Sciatic nerve (tissue), 2 donors: ENCODE measurements at regions of chr17 and their contacts with region 1.

Region 1: GRCh38 chr17:20991276-20992037 is 51.4 kb downstream of the USP22 start:
- DNase-seq: peak; percentile 56
- ATAC-seq: no peak

Region 2: DNA sequence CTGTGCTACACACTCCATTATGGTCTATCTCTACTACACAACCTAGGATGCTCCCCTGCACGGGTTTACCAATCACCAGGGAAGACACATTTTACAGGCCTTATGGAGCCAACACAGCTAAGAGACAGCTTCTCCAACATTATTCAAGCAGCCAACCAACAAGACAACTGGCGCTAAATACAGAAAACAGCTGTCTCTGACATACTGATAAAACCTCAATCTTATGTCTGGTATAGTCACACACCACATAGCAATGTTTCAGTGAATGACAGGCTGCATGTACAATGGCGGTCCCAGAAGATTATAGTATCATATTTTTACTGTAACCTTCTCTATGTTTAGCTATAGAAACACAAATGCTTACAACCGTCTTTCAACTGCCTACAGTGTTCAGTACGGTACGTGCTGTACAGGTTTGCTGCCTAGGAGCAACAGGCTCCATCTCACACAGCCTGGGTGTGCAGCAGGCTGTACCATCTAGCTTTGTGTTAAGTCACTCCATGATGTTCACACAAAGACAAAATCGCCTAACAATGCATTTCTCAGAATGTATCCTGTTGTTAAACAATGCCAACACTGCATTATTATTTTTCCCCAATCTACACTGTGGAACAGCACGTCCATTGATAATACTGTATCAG is 40.4 kb after region 1 on chr17:
- intact Hi-C with region 1: loop called (anchors 1 kb)
- DNase-seq: no peak
- ATAC-seq: no peak

Region 3: DNA sequence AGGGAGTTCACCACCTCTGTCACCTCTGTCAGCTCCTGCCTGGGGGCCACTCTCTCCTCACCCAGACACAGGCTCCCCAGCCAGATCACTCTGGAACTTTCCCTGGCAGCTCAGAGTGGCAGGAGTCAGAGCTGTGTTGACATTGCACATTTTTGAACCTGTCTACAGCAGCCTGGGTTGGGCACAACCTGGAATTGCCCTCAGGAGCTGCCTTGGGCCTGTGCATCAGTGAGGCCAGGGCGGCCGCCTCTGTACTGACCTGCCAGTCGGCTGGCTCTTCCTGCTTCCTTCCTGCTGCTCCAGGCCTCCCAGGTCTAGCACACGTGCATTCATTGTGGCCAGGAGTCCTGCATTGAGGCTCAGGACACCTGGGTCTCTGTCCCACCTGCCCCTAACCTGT is 236.6 kb after region 1 on chr17:
- intact Hi-C with region 1: no loop called
- DNase-seq: no peak
- ATAC-seq: no peak